Lower leg skin (tissue), 4 donors: ENCODE measurements at regions of chr13 and their contacts with region 1.

Region 1: GRCh38 chr13:51194942-51195341 is 27.3 kb upstream of the FAM124A start:
- DNase-seq: no peak
- H3K4me3 ChIP-seq: no peak overlapping the region
- CTCF ChIP-seq: no peak
- POLR2A ChIP-seq: no peak

Region 2: DNA sequence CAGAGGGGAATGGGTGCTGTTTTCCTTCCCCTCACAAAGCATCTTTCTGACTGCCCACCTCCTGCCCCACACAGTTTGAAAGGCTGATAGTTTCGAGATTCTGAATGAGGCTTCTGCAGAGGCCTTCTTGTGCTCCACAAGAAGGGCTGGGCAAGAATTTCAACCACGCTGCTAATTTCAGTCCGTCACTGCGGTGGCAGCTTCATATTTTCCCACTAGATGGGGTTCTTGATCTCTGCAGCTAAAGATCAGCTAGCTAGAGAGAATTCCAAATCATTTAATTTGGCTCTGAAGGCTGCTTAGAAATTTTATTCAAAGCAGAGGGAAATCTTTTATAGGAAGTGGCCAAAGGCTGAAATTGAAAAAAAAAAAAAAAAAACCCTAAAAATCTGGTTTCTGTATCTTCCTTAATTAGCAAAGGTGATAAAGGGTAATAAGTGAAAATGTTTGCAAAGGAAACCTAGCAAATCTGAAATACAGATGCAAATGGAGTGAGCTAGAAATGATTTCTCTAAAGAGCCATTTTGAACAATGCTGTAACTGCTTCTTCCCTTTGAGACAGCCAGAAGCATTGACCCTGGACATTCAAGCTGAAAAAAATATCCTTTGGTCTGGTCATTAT is 45.9 kb before region 1 on chr13:
- intact Hi-C with region 1: loop called (anchors 1 kb)
- DNase-seq: no peak
- H3K4me3 ChIP-seq: no peak overlapping the region
- CTCF ChIP-seq: no peak
- POLR2A ChIP-seq: no peak